WTC11 (cell line): ENCODE measurements at regions of chr11 and their contacts with region 1.

Region 1: GRCh38 chr11:83836883-83837654 is 550.9 kb upstream of the CCDC90B start:
- DNase-seq: peak; percentile 56
- ATAC-seq: peak; percentile 99
- H3K4me3 Mint-ChIP-seq: no peak overlapping the region
- H3K27ac Mint-ChIP-seq: no peak overlapping the region
- H3K4me1 Mint-ChIP-seq: peaks cover 4% of the 10 kb centered on the region; the same call in 1 of the 2 replicates
- H3K27me3 Mint-ChIP-seq: no peaks in the 10 kb centered on the region
- CTCF ChIP-seq: peak; percentile 69

Region 2: GRCh38 chr11:84089072-84090057 is 252.3 kb after region 1 on chr11:
- CTCF ChIA-PET with region 1: interaction called, 10 read pairs
- POLR2A ChIA-PET with region 1: no interaction called
- DNase-seq: no peak
- ATAC-seq: no peak
- H3K4me3 Mint-ChIP-seq: no peak overlapping the region
- H3K27ac Mint-ChIP-seq: no peak overlapping the region
- H3K4me1 Mint-ChIP-seq: no peaks in the 10 kb centered on the region
- H3K27me3 Mint-ChIP-seq: no peaks in the 10 kb centered on the region
- CTCF ChIP-seq: no peak

Region 3: DNA sequence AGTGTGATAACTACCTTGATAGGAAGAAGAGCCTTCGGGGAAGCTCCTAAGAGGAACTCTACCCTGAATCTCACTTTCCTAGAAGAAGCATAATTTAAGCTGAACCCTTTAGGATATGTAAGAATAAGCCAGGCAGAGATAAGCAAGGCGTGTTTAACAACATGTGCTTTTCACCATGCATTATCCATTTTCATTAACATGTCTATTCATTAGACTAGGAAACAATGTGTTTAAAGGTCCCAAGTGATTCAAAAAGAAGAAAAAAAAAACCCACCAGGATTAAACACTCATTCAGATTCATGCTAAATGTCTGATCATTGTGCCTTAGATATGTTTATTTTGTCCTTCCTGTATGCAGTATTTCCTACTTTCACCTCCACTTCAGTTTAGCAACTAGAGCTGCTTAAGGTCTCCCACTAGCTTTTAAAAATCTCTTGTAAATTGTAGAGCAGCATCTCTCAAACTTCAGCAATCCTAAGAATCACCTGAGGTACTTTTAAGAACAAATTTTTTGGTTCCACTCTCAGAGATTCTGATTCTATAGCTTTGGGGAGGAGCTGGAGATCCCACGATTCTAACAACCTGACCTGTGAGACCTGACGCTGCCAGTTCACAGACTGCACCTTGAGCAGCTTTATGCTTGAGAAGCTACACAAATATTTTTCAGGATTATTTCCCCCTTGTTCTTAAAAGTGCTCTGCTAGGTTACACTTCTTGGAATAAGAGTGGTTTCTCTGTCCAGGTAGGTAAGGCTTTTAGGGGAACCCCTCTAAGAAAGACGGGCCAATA is 404.5 kb after region 1 on chr11:
- CTCF ChIA-PET with region 1: interaction called, 10 read pairs
- POLR2A ChIA-PET with region 1: no interaction called
- DNase-seq: no peak
- ATAC-seq: peak; percentile 53
- H3K4me3 Mint-ChIP-seq: no peak overlapping the region; the same call in 1 of the 2 replicates
- H3K27ac Mint-ChIP-seq: peak overlapping the region; percentile 93
- H3K4me1 Mint-ChIP-seq: peaks cover 25% of the 10 kb centered on the region
- H3K27me3 Mint-ChIP-seq: no peaks in the 10 kb centered on the region
- CTCF ChIP-seq: no peak

Region 4: DNA sequence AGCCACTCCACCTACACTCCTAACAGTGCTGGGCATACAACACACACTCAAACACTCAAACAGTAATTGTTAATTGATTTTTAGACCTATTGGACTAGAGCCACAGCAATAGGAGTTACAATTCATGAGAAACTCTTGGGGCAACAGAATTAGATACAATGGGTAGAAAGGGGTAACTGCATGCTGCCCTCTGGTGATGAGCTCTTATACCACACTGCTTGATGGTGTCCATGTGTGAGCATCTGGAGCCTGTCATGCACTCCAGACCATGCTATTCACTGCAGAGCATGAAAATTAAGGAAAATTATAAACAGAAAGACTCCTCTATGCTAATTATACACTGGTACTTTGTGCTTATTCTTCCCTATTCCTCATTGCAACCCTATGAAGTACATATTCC is 424.6 kb after region 1 on chr11:
- CTCF ChIA-PET with region 1: interaction called, 42 read pairs
- POLR2A ChIA-PET with region 1: no interaction called
- DNase-seq: peak; percentile 38
- ATAC-seq: peak; percentile 96
- H3K4me3 Mint-ChIP-seq: no peak overlapping the region
- H3K27ac Mint-ChIP-seq: no peak overlapping the region
- H3K4me1 Mint-ChIP-seq: no peaks in the 10 kb centered on the region
- H3K27me3 Mint-ChIP-seq: no peaks in the 10 kb centered on the region
- CTCF ChIP-seq: peak; percentile 28; the same call in 1 of the 2 replicates

Region 5: DNA sequence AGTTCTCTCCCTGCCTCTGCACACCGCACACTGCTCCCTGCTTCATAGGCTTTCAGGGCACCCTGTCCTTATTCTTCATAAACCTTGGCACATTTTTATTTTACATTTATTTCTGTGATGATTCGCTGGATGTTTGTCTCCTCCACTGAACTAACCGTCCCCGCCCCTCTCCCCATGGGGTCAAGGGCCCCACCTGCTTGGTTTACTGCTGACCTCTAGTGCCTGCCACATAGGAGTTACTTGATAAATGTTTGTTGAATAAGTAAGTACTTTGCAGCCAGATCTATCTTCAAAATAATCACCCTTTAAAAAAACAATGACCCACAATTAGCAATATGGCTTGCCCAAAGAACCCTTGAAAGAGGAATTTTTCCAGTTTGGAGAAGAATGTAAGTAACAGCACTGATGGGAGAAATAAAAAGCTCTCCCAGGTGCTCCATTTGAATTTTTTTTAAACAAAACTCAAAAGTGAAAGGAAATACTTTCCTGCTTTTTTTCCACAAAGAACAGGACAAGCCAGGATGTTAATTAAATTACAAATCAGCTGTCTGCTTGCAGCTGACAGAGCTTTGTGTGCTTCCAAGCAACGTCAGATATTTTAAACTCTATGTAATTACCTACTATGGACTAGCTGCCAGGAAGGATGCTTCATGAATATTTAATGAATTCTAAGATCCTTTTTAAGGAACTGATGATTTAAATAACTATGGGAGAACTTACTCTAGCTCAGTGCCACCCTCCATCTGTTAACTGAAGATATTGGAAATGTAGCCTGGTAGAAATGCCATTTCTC is 706.5 kb after region 1 on chr11:
- CTCF ChIA-PET with region 1: interaction called, 12 read pairs
- POLR2A ChIA-PET with region 1: no interaction called
- DNase-seq: peak; percentile 80
- ATAC-seq: peak; percentile 95
- H3K4me3 Mint-ChIP-seq: peak overlapping the region; percentile 55
- H3K27ac Mint-ChIP-seq: peak overlapping the region; percentile 91
- H3K4me1 Mint-ChIP-seq: peaks cover 43% of the 10 kb centered on the region
- H3K27me3 Mint-ChIP-seq: no peaks in the 10 kb centered on the region
- CTCF ChIP-seq: no peak